ENCODE measurements at regions of chr1 and their contacts with region 1.

Region 1: DNA sequence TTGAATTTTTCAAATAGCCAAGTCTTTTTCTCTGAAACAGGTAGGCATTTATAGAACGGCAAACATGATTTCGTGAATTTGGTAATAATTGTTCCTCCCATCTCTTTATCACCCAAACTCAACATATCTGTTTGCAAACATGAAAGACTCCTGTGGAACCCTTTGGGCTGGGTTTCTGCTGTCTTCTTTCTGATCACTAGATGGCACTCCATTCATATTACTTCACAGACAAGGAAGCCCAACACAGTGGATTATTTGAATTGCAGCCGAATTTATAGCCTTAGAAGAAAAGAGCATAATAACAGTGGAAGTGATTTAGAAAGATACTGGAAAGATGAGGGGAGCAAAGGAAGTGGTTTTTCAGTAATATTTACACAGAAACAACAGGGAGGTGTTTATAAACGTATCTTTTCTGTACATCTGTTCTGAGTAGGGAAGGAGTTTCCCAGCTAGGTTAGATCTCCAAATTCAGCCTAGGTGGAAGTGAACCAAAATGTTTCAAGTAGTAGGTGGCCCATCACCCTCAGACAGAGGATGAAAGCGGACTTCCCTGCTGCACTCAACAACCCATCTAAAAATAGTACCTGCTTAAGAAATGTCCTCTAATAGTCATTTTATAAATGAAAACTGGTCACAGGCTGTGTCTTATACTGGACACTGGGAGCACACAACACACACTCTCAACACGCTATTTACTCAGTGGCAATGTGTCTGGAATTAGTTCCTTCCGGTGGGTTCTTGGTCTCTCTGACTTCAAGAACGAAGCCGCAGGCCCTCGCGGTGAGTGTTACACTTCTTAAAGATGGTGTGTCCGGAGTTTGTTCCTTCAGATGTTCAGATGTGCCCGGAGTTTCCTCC is 67.6 kb downstream of the MAP3K21 start:
- DNase-seq: no peak
- H3K4me3 Mint-ChIP-seq: no peak overlapping the region
- H3K27ac Mint-ChIP-seq: no peak overlapping the region
- H3K4me1 Mint-ChIP-seq: no peaks in the 10 kb centered on the region
- H3K27me3 Mint-ChIP-seq: peaks cover 21% of the 10 kb centered on the region

Region 2: GRCh38 chr1:233304489-233305102 is 90.5 kb before region 1 on chr1:
- intact Hi-C with region 1: loop called (anchors 10 kb)
- DNase-seq: no peak
- H3K4me3 Mint-ChIP-seq: no peak overlapping the region
- H3K27ac Mint-ChIP-seq: no peak overlapping the region
- H3K4me1 Mint-ChIP-seq: peaks cover 2% of the 10 kb centered on the region
- H3K27me3 Mint-ChIP-seq: peaks cover 20% of the 10 kb centered on the region

Region 3: GRCh38 chr1:233440951-233441401 is 45.9 kb after region 1 on chr1:
- intact Hi-C with region 1: loop called (anchors 2 kb)
- DNase-seq: no peak
- H3K4me3 Mint-ChIP-seq: no peak overlapping the region
- H3K27ac Mint-ChIP-seq: no peak overlapping the region
- H3K4me1 Mint-ChIP-seq: peaks cover 2% of the 10 kb centered on the region
- H3K27me3 Mint-ChIP-seq: peaks cover 13% of the 10 kb centered on the region